Activated CD8-positive, alpha-beta T cell treated with anti-CD3 and anti-CD28 coated beads for 36 hours (primary cell): ENCODE measurements at regions of chr22 and their contacts with region 1.

Region 1: GRCh38 chr22:49970528-49971231 is 10.1 kb downstream of the PIM3 start:
- DNase-seq: peak; percentile 99
- ATAC-seq: peak; percentile 87
- H3K4me3 Mint-ChIP-seq: no peak overlapping the region
- H3K27ac Mint-ChIP-seq: peak overlapping the region; percentile 93
- H3K4me1 Mint-ChIP-seq: peaks cover 29% of the 10 kb centered on the region
- H3K27me3 Mint-ChIP-seq: no peaks in the 10 kb centered on the region
- CTCF ChIP-seq: no peak

Region 2: GRCh38 chr22:49930739-49931412 is 39.8 kb before region 1 on chr22:
- CTCF ChIA-PET with region 1: interaction called, 12 read pairs
- POLR2A ChIA-PET with region 1: interaction called, 13 read pairs
- intact Hi-C with region 1: loop called (anchors 5 kb)
- DNase-seq: peak; percentile 76
- ATAC-seq: peak; percentile 32
- H3K4me3 Mint-ChIP-seq: no peak overlapping the region
- H3K27ac Mint-ChIP-seq: peak overlapping the region; percentile 27
- H3K4me1 Mint-ChIP-seq: peaks cover 37% of the 10 kb centered on the region
- H3K27me3 Mint-ChIP-seq: no peaks in the 10 kb centered on the region
- CTCF ChIP-seq: peak; percentile 51

Region 3: DNA sequence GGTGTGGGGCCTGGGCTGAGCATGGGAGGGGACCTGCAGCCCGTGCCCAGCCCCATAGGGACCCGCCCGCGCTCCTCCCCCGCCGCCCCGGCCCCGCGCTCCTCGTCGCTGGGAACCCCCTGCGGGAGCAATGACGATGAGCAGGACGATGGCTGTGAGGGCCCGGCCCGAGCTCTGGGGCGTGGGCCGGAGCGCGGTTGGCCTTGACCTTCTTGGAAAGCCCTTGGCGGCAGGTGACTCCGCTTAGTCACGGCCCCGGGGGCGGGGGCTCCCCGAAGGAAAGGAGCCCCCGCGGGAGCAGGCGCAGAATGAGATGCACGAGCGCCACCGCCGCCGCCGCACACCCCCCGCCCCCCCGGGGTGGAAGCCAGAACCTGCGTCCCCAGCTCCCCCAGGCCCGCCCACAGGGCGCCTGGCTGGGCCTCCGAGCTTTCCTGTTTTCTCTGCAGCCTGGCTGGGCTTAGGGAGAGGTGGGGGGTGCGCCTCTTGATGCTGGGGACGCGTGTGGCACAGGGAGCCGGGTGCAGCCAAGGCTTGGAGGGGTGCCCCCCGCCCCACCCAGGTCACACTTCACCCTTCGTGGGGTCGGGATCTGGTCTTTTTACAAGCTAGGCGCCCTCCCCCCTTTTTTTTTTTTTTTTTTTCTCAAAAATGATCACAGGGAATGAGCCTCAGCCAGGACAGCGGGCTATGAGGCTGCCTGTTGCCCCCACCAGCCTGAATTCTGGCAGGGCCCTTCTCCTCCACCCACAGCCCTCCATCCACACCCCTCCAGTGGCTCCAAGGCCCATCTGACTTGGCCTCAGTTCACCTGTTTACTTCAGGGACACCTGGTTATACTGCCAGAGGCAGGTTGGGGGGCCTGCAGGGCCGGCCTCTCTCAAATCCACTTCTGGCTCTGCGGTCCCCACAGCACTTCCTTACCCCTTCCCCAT is 34.4 kb before region 1 on chr22:
- CTCF ChIA-PET with region 1: interaction called, 12 read pairs
- POLR2A ChIA-PET with region 1: interaction called, 13 read pairs
- intact Hi-C with region 1: loop called (anchors 5 kb)
- DNase-seq: peak; percentile 100
- ATAC-seq: peak; percentile 87
- H3K4me3 Mint-ChIP-seq: peak overlapping the region; percentile 63
- H3K27ac Mint-ChIP-seq: peak overlapping the region; percentile 90
- H3K4me1 Mint-ChIP-seq: peaks cover 24% of the 10 kb centered on the region
- H3K27me3 Mint-ChIP-seq: no peaks in the 10 kb centered on the region
- CTCF ChIP-seq: no peak

Region 4: GRCh38 chr22:49960159-49961004 is 10.3 kb before region 1 on chr22 and contains the start of gene PIM3:
- CTCF ChIA-PET with region 1: interaction called, 3 read pairs
- POLR2A ChIA-PET with region 1: interaction called, 63 read pairs
- intact Hi-C with region 1: no loop called
- DNase-seq: peak; percentile 96
- ATAC-seq: peak; percentile 79
- H3K4me3 Mint-ChIP-seq: peak within 1 kb of the TSS; percentile 95
- H3K27ac Mint-ChIP-seq: peak within 1 kb of the TSS; percentile 95
- H3K4me1 Mint-ChIP-seq: peaks cover 25% of the 10 kb centered on the region
- H3K27me3 Mint-ChIP-seq: no peaks in the 10 kb centered on the region
- CTCF ChIP-seq: no peak
- total RNA-seq, gene PIM3: 146 to 158 TPM

Region 5: GRCh38 chr22:50012716-50013181 is 42.1 kb after region 1 on chr22 and contains the start of gene IL17REL:
- CTCF ChIA-PET with region 1: no interaction called
- POLR2A ChIA-PET with region 1: interaction called, 14 read pairs
- intact Hi-C with region 1: loop called (anchors 5 kb)
- DNase-seq: no peak
- ATAC-seq: no peak
- H3K4me3 Mint-ChIP-seq: peak within 1 kb of the TSS; percentile 62
- H3K27ac Mint-ChIP-seq: peak within 1 kb of the TSS; percentile 72
- H3K4me1 Mint-ChIP-seq: peaks cover 31% of the 10 kb centered on the region
- H3K27me3 Mint-ChIP-seq: peaks cover 2% of the 10 kb centered on the region
- CTCF ChIP-seq: no peak
- total RNA-seq, gene IL17REL: 0.14 TPM in 1 of 2 experiments, not detected in the other